ENCODE measurements at regions of chr17 and their contacts with region 1.

Region 1: GRCh38 chr17:47315451-47316266 is 8.1 kb upstream of the EFCAB13 start:
- DNase-seq: peak; percentile 82
- H3K4me3 Mint-ChIP-seq: no peak overlapping the region
- H3K27ac Mint-ChIP-seq: no peak overlapping the region
- H3K4me1 Mint-ChIP-seq: peaks cover 3% of the 10 kb centered on the region
- H3K27me3 Mint-ChIP-seq: peaks cover 12% of the 10 kb centered on the region

Region 2: DNA sequence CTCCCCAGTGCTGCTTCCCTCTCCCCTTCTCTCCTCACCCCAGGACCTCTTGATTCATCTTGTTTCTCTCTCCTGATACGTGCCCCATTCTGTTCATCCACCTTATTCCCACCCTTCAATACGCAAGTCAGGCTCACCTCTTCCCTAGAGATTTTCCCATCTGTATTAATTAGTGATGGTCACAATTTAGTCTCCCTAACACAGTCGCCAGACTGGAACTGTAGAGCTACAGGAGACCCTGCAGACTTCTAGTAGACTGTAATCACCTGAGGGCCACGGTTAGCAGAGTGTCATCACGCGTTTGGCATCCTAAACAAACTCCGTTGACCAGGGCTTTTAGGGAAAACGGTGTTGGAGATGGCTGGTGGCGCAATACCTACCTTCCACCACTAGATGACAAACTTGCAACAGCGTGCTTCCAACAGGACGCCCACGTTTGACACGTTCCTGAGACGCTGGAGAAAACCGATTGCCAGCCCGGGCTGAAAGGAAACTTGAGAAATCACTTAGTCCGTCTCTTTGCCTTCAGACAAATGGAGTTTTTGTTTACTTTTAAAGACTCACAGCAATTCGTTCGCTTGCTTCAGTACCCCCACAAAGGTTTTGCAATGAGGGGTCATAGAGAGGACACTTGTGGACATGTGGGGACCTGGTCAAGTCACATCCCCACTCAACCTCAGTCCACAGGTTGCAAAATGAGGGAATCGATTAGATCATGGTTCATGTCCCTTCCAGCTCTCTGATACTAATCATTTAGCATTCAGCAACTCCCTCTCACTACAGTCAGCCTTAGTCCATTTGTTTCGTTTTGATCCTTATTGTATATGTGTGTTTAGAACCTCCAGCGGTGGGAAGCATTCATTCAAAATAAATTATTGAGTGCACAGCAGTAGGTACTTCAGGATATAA is 85.9 kb before region 1 on chr17:
- intact Hi-C with region 1: loop called (anchors 1 kb)
- DNase-seq: peak; percentile 91
- H3K4me3 Mint-ChIP-seq: peak overlapping the region; percentile 78
- H3K27ac Mint-ChIP-seq: peak overlapping the region; percentile 39
- H3K4me1 Mint-ChIP-seq: peaks cover 17% of the 10 kb centered on the region
- H3K27me3 Mint-ChIP-seq: peaks cover 11% of the 10 kb centered on the region

Region 3: DNA sequence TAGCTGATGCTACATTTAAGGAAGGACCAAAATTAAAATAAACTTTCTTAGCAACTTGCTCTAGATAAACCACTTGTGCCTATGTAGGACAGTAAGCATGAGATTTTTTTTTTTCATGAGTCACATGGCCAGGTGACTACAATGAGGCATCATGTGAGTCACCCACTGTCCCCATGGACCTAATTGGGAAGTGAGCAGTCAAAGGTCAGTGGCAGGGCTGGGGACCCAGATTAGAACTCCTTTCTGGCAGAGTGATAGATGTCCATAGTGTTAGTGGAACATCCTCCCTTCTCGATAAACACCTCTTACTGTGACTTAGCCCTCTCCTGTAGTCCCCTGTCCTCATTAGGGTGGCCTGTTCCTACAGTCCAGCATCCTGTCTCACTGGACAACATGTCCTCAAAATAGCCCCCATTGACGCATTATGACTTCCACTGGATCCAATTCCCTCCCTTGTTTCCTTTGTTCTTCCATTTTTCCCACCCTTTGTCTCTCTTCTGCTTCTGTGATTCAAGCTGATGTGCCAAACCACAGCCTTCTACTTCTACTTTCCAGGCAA is 49.6 kb before region 1 on chr17:
- intact Hi-C with region 1: no loop called
- DNase-seq: no peak
- H3K4me3 Mint-ChIP-seq: no peak overlapping the region
- H3K27ac Mint-ChIP-seq: no peak overlapping the region
- H3K4me1 Mint-ChIP-seq: no peaks in the 10 kb centered on the region
- H3K27me3 Mint-ChIP-seq: peaks cover 15% of the 10 kb centered on the region

Region 4: GRCh38 chr17:47295062-47295845 is 20.4 kb before region 1 on chr17:
- intact Hi-C with region 1: no loop called
- DNase-seq: no peak
- H3K4me3 Mint-ChIP-seq: no peak overlapping the region
- H3K27ac Mint-ChIP-seq: no peak overlapping the region
- H3K4me1 Mint-ChIP-seq: no peaks in the 10 kb centered on the region
- H3K27me3 Mint-ChIP-seq: peaks cover 7% of the 10 kb centered on the region